SK-N-SH (cell line): ENCODE measurements at regions of chr2 and their contacts with region 1.

Region 1: DNA sequence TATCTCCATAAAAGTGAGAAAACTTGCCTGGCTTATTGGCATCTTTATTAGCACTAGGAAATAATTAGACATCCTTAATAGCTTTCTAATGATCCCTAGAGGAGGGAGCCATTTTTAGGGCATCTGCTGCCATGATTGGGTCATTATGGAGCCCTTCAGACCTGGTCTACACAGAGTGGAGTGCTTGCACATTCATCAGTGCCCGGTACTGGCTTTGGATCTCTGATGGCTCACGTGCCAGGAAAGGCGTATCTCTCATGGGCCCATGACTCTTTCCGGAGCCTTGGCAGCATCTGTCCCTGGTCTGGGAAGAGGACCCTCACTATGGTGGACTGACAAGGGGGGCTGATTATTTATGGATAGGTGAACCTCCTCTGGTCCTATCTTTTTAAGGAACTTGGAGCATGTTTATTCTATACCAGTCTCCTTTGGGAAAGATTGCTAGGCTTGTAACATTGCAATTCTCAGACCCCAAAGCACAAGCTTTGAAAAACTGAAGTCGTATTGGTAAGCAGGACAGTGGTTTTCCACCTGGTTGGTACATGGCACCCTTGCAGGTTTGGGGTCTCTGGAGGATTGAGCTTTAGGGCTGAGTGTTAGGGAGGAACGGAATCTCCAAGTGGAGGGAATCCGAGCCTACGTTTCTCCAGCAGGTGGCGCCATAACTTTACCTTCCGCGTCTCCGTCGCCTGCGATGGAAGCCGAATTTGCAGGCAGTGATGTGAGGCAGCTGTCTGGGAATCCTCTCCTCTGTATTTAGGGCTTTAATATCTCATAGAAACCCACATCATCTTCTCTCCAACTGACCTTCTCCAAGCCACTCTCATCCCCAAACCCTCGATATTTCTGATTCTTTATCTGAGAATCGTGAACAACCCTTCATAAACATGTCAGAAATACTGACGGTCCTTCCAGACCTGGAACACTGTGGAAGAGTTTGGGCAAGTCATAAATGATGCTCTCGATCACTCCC is 27.8 kb downstream of the SIX2 start:
- DNase-seq: peak; percentile 87
- H3K4me3 ChIP-seq: peak overlapping the region in 1 of 2 experiments; percentile 10; a peak in 1 of 4 replicates
- H3K27ac ChIP-seq: no peak overlapping the region
- H3K4me1 ChIP-seq: no peaks in the 10 kb centered on the region; a peak in 1 of 4 replicates
- H3K27me3 ChIP-seq: no peaks in the 10 kb centered on the region
- CTCF ChIP-seq: peak; percentile 93
- EP300 ChIP-seq: no peak
- RAD21 ChIP-seq: peak; percentile 100

Region 2: GRCh38 chr2:45000921-45001868 is 19.8 kb after region 1 on chr2:
- CTCF ChIA-PET with region 1: interaction called, 26 read pairs
- POLR2A ChIA-PET with region 1: no interaction called
- DNase-seq: no peak
- H3K4me3 ChIP-seq: no peak overlapping the region
- H3K27ac ChIP-seq: no peak overlapping the region
- H3K4me1 ChIP-seq: no peaks in the 10 kb centered on the region; a peak in 1 of 4 replicates
- H3K27me3 ChIP-seq: peaks cover 8% of the 10 kb centered on the region; the same call in 1 of the 2 replicates
- CTCF ChIP-seq: no peak
- EP300 ChIP-seq: no peak
- RAD21 ChIP-seq: no peak

Region 3: GRCh38 chr2:45024600-45025291 is 43.3 kb after region 1 on chr2:
- CTCF ChIA-PET with region 1: interaction called, 11 read pairs
- POLR2A ChIA-PET with region 1: no interaction called
- DNase-seq: no peak
- H3K4me3 ChIP-seq: no peak overlapping the region
- H3K27ac ChIP-seq: no peak overlapping the region
- H3K4me1 ChIP-seq: no peaks in the 10 kb centered on the region; a peak in 1 of 4 replicates
- H3K27me3 ChIP-seq: no peaks in the 10 kb centered on the region
- CTCF ChIP-seq: peak; percentile 67
- EP300 ChIP-seq: peak in 1 of 2 experiments; percentile 82; a peak in 2 of 4 replicates
- RAD21 ChIP-seq: peak; percentile 52

Region 4: DNA sequence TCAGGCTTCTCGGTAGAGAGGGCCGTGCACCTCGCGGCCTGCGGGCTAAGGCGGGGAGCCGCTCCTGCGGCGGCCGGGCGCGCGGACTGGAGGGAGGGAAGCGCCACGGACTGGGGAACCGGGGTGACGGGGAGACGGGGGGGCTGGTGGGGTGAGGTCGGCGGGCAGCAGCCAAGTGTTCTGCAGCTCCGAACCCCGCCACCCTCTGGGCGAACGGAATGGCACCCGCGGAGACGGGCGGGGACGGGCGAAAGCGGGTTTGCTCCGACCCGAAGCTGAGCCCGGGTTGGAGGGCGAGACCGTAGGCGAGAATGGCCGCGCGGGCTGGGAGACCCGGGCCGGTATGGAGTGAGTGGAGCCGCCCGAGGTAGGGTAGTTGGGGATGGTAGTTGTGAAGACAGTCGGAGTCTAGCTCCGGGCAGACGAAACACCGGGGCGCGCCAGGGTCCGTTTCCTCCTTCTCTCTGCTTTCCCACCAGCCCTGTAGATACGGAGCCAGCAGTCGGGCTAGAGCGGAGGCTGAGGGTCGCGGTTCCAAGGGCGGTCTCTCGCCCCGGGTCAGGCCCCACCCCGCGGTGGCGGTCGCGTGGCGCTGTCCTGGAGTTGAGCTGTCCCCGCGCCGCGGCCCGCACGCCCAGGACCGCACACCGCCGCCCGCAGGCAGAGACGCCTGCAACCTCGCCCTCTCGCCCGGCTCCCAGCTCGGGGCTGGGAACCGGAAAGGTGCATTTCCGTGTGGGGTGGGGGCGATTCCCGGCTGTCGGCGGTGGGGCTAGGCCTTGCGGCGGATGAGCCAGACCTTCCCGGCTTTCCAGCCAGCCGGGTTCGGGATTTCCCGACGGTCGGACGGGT is 188.1 kb after region 1 on chr2:
- CTCF ChIA-PET with region 1: interaction called, 26 read pairs
- POLR2A ChIA-PET with region 1: interaction called, 3 read pairs
- DNase-seq: peak; percentile 89
- H3K4me3 ChIP-seq: peak overlapping the region; percentile 54 to 62
- H3K27ac ChIP-seq: no peak overlapping the region; a peak in 1 of 4 replicates
- H3K4me1 ChIP-seq: peaks cover 14% of the 10 kb centered on the region in 2 experiments
- H3K27me3 ChIP-seq: no peaks in the 10 kb centered on the region
- CTCF ChIP-seq: no peak
- EP300 ChIP-seq: no peak
- RAD21 ChIP-seq: no peak

Region 5: GRCh38 chr2:45439788-45440773 is 458.7 kb after region 1 on chr2:
- CTCF ChIA-PET with region 1: interaction called, 14 read pairs
- POLR2A ChIA-PET with region 1: no interaction called
- DNase-seq: peak; percentile 28
- H3K4me3 ChIP-seq: no peak overlapping the region
- H3K27ac ChIP-seq: peak overlapping the region in 1 of 2 experiments; percentile 13; a peak in 2 of 4 replicates
- H3K4me1 ChIP-seq: peaks cover 2 to 7% of the 10 kb centered on the region in 2 experiments; a peak in 3 of 4 replicates
- H3K27me3 ChIP-seq: no peaks in the 10 kb centered on the region
- CTCF ChIP-seq: peak; percentile 52
- EP300 ChIP-seq: no peak
- RAD21 ChIP-seq: peak; percentile 52

Region 6: DNA sequence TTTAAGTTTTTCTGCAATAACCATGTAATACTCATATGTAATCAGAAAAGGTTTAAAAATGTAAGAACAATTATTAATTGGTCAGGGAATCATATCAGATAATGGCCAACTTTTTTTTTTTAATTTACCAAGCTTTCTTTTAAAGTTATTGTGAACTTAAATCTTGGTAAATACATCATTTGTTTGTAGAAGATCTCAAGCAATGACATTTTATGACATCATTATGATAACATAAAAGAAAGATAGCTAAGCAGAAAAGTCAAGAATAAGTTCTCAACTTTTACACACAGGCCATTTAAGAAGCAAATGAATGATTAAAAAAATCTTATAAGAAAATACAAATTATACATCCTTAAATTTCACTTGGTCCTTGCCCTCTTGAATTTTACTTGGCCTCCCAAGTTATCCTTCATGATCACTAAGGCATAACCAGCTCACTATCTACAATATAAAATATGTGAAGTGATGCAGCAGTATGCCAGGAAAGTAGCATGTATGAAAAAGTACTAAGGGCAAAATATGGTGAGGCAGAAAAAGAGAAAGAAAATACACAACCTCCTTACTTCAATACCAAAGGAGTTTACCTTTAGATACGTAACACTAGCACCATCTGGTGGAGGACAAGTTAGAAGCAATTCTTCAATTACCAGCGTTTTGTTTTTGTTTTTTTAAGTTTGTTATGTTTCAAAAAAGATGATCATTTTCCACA is 513.0 kb after region 1 on chr2:
- CTCF ChIA-PET with region 1: interaction called, 318 read pairs
- POLR2A ChIA-PET with region 1: no interaction called
- DNase-seq: peak; percentile 56
- H3K4me3 ChIP-seq: peak overlapping the region in 1 of 2 experiments; percentile 7; a peak in 1 of 4 replicates
- H3K27ac ChIP-seq: no peak overlapping the region; a peak in 1 of 4 replicates
- H3K4me1 ChIP-seq: peaks cover 0 to 4% of the 10 kb centered on the region in 2 experiments; a peak in 1 of 4 replicates
- H3K27me3 ChIP-seq: no peaks in the 10 kb centered on the region
- CTCF ChIP-seq: peak; percentile 93
- EP300 ChIP-seq: no peak
- RAD21 ChIP-seq: peak; percentile 97

Region 7: DNA sequence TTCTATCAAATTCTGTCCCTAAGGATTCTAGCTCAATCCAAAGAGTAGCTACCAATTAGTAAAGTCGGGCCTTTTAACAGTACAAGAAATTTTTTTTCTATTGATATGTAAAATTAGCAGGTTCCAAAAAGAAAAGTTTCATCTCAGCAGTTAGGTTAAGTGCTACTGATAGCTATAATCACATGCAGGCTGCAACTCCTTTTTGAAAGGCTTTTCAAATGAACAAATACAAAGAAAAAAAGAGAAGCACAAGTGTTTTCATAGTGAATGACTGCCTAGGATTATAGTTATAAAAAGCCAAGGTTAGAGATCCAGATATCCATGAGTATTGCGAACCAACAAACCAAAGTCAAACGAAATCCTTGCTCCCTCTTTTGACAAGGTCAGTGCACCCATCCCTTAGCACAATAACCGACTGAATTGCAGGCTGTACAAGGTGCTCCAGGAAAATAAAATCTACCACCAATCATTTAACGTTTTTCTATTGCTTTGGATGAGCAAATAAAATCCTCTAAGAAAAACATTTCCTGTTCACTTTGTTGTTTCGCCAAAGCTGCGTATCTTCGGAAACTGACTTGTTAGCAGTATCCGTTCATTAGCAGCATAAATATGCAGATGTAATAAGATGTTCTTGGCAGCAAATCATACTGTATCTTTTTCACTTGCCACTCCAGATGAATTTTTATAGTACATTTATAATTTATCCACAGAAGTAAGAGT is 529.4 kb after region 1 on chr2:
- CTCF ChIA-PET with region 1: interaction called, 34 read pairs
- POLR2A ChIA-PET with region 1: no interaction called
- DNase-seq: no peak
- H3K4me3 ChIP-seq: no peak overlapping the region
- H3K27ac ChIP-seq: no peak overlapping the region
- H3K4me1 ChIP-seq: no peaks in the 10 kb centered on the region; a peak in 2 of 4 replicates
- H3K27me3 ChIP-seq: no peaks in the 10 kb centered on the region
- CTCF ChIP-seq: no peak
- EP300 ChIP-seq: no peak
- RAD21 ChIP-seq: no peak